ENCODE measurements at regions of chr17 and their contacts with region 1.

Region 1: GRCh38 chr17:69567130-69567529 is 152.6 kb downstream of the MAP2K6 start:
- DNase-seq: no peak
- H3K4me3 ChIP-seq: no peak overlapping the region
- H3K27ac ChIP-seq: no peak overlapping the region
- H3K4me1 ChIP-seq: peaks cover 34% of the 10 kb centered on the region
- CTCF ChIP-seq: no peak

Region 2: GRCh38 chr17:69511250-69511649 is 55.9 kb before region 1 on chr17:
- CTCF ChIA-PET with region 1: no interaction called
- POLR2A ChIA-PET with region 1: no interaction called
- intact Hi-C with region 1: no loop called
- DNase-seq: no peak
- H3K4me3 ChIP-seq: no peak overlapping the region
- H3K27ac ChIP-seq: no peak overlapping the region
- H3K4me1 ChIP-seq: peaks cover 4% of the 10 kb centered on the region
- CTCF ChIP-seq: no peak

Region 3: GRCh38 chr17:69733171-69734012 is 166.3 kb after region 1 on chr17:
- CTCF ChIA-PET with region 1: no interaction called
- POLR2A ChIA-PET with region 1: no interaction called
- intact Hi-C with region 1: loop called (anchors 5 kb)
- DNase-seq: peak; percentile 30
- H3K4me3 ChIP-seq: no peak overlapping the region
- H3K27ac ChIP-seq: no peak overlapping the region
- H3K4me1 ChIP-seq: no peaks in the 10 kb centered on the region
- CTCF ChIP-seq: no peak

Region 4: DNA sequence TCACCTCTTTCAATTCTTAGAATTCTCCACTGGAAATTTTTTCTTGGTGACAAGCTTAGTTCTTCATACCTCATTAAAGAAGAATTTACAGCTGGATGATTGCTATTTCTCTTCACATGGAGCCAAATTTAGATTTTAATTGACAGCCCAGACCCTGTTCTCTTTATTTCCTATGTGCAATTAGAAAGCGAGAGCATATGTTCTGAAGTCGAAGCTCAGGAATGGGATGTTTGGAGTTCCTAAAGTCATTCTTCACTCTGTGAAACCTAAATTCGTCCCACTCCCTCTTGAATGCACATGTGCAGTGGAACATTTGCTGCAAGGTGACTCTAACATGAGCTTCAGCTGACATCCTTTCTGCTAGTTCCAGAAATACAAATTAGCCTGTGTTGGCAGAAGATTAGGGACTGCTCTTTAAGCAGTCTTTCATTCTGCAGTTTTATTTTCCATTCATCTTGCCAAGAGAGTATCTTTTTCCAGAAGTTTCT is 378.6 kb after region 1 on chr17:
- CTCF ChIA-PET with region 1: no interaction called
- POLR2A ChIA-PET with region 1: interaction called, 3 read pairs
- intact Hi-C with region 1: loop called (anchors 10 kb)
- DNase-seq: no peak
- H3K4me3 ChIP-seq: no peak overlapping the region
- H3K27ac ChIP-seq: no peak overlapping the region
- H3K4me1 ChIP-seq: no peaks in the 10 kb centered on the region
- CTCF ChIP-seq: no peak

Region 5: DNA sequence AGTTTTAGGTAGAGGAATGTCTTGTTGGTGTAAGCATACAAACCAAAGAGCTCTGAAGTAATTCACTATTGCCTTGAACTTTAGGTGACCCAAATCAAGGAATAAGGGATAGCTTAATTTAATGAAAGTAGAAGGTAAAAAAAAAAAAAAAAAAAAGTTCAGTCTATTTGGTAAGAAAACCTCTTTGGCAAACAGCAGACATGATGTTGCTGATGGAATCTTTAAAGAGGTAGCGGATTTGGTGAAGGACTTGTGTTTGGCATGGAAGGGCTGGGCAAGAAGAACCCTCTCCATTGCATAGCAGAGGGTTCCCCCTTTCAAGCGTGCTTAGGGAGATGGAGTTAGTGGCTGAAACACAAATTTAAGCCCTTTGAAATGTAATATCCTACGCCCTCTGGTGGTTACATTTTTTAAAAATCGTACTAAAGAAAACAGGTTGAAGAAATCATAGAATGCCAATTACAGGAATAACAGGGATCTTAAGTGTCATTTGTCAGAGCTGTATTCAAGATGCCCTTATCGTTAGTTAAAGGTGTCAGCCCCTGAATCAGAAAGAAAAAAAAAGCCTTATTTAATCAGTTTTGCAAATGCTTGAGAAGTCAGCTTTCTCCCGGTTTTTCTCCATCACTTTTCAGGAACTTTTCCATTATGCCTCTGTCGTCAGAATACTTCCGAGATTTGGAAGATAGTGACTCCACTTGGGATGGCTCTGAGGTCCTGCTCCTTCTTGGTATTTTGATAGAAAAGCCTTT is 985.3 kb after region 1 on chr17:
- CTCF ChIA-PET with region 1: no interaction called
- POLR2A ChIA-PET with region 1: no interaction called
- intact Hi-C with region 1: loop called (anchors 5 kb)
- DNase-seq: peak; percentile 69
- H3K4me3 ChIP-seq: no peak overlapping the region
- H3K27ac ChIP-seq: no peak overlapping the region
- H3K4me1 ChIP-seq: no peaks in the 10 kb centered on the region
- CTCF ChIP-seq: peak; percentile 87

Measured in OCI-LY7 (cell line).